Psoas muscle (tissue), 8 donors: ENCODE measurements at regions of chr9 and their contacts with region 1.

Region 1: GRCh38 chr9:22452415-22453010 is 5.9 kb downstream of the DMRTA1 start:
- DNase-seq: peak in 1 of 2 donors; percentile 19
- ATAC-seq: peak in 3 of 4 donors; percentile 49 to 78 (median 69)
- H3K4me3 ChIP-seq: no peak overlapping the region
- H3K27ac ChIP-seq: no peak overlapping the region
- H3K4me1 ChIP-seq: peaks cover 4% of the 10 kb centered on the region
- H3K27me3 ChIP-seq: no peaks in the 10 kb centered on the region
- CTCF ChIP-seq: peak; percentile 90

Region 2: DNA sequence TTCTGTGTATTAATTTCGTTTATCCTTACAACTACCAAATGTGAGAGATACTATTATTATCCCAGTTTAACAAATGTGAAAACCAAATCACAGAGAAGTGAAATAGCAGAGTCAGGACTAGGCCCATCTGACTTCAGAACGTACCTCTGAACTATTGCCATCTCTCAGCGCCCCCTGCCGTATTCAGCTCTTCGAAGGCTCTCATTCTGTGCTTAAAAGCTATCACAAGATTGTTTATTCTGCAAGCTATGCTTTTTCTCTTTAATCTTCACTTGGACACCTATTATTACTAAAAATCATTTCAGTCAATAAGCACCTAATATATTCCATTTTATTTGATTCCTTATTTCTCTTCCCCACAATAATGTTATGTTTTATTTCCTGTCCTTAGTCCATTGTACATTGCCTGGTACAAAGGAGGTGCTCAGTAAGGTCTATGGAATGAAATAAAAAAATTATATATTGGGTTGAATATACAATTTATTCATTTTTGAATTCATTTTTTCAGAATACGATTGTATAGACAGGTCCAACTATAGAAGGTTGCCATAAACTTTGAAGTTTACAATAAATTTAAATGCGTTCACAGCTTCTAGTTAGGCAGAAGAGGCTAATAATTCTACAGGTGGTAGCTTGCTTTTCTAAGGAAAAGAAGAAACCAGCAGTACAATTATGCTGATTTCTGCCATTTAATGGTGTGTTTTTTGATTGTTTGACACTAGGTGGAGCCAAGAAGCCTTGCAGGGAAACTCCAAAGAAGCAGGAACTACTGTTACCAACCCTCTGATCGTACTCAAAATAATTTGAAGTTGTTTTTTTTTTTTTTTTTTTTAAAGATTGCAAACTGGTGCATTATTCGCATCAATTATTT is 208.1 kb before region 1 on chr9:
- intact Hi-C with region 1: loop called (anchors 5 kb)
- DNase-seq: peak in 1 of 2 donors; percentile 45
- ATAC-seq: peak in 2 of 4 donors; percentile 61 to 73
- H3K4me3 ChIP-seq: no peak overlapping the region
- H3K27ac ChIP-seq: no peak overlapping the region
- H3K4me1 ChIP-seq: no peaks in the 10 kb centered on the region
- H3K27me3 ChIP-seq: no peaks in the 10 kb centered on the region
- CTCF ChIP-seq: peak; percentile 53

Region 3: DNA sequence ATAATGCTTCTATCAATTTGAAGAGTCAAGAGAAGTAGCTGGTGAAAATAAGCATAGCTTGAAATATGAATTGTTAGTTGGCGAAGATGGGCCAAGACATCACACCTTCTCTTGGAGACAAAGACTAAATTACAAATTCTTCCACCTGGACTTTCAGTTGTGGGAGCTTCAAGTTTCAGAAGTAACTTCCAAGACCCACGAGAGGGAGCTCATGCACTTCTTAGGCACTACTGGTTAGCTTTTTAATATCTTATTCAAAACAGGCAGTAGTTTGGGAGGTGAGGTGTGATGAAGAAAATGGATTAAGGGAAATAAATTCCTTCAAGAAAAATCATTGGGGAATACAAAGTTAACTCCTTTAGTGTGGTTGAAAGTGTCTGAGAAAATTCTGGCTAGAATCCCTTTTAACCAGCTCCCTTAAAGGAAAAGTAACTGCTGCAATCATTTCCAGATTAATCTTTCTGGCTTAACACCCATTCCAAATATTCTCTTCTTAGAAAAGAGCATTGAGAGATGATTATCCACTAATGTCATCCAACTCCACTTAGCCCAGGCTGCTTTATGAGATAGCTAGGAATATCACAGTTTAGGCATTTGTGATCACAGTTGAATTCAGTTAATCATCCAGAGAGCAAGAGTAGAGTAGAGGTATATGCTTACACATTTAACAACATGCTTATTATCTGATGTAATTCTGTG is 145.4 kb before region 1 on chr9:
- intact Hi-C with region 1: loop called (anchors 2 kb)
- DNase-seq: no peak
- ATAC-seq: peak in 2 of 4 donors; percentile 53 to 70
- H3K4me3 ChIP-seq: no peak overlapping the region
- H3K27ac ChIP-seq: no peak overlapping the region
- H3K4me1 ChIP-seq: no peaks in the 10 kb centered on the region
- H3K27me3 ChIP-seq: no peaks in the 10 kb centered on the region
- CTCF ChIP-seq: peak; percentile 68

Region 4: DNA sequence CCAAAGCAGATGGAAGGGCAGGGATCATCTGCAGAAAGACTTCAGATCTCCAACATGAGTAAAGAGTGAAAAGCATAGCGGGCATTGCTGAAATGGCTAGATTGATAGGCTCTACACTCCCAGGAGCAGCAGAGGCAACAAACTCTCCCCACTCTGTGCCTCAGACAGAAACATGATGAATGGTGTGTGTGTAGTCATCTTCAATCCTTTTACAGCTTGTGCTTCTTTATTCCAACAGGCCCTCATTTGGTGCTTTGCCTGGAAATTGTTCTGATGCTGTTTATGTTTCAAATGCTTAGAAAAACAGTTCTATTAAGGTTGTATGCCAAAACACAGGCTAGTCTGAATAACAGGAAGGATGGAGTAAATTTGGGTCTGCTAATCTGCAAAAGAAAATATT is 170.3 kb after region 1 on chr9:
- intact Hi-C with region 1: no loop called
- DNase-seq: no peak
- ATAC-seq: no peak
- H3K4me3 ChIP-seq: no peak overlapping the region
- H3K27ac ChIP-seq: no peak overlapping the region
- H3K4me1 ChIP-seq: peaks cover 4% of the 10 kb centered on the region
- H3K27me3 ChIP-seq: no peaks in the 10 kb centered on the region
- CTCF ChIP-seq: no peak

Region 5: DNA sequence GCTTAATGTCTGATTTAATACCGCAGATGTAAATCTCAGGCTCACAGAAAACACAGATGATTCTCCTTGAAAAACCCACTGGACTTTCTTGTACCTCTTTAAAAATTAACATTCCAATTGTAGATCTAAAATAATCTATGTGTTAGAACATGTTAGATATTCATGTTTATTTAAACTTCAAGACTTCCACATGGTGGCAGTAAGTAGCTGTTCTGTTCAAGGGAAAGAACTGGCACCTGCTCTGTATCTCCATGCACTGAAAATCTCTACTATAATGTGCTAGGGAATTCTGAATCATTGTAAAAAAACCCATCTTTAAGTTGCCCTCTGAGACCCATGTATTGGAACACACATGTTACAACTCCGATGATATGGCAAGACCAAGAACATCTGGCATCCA is 361.0 kb after region 1 on chr9:
- intact Hi-C with region 1: no loop called
- DNase-seq: no peak
- ATAC-seq: no peak
- H3K4me3 ChIP-seq: no peak overlapping the region
- H3K27ac ChIP-seq: no peak overlapping the region
- H3K4me1 ChIP-seq: no peaks in the 10 kb centered on the region
- H3K27me3 ChIP-seq: no peaks in the 10 kb centered on the region
- CTCF ChIP-seq: peak; percentile 14